PC-3 (cell line): ENCODE measurements at regions of chr9 and their contacts with region 1.

Region 1: GRCh38 chr9:79565245-79565644 is 6.5 kb upstream of the TLE4 start:
- DNase-seq: peak; percentile 65
- ATAC-seq: peak; percentile 67
- H3K4me3 ChIP-seq: no peak overlapping the region
- H3K27ac ChIP-seq: no peak overlapping the region
- H3K4me1 ChIP-seq: peaks cover 18% of the 10 kb centered on the region
- H3K27me3 ChIP-seq: no peaks in the 10 kb centered on the region
- CTCF ChIP-seq: no peak

Region 2: GRCh38 chr9:79360387-79361347 is 204.6 kb before region 1 on chr9:
- CTCF ChIA-PET with region 1: no interaction called
- POLR2A ChIA-PET with region 1: no interaction called
- intact Hi-C with region 1: loop called (anchors 10 kb)
- DNase-seq: peak; percentile 27
- ATAC-seq: no peak
- H3K4me3 ChIP-seq: no peak overlapping the region
- H3K27ac ChIP-seq: no peak overlapping the region
- H3K4me1 ChIP-seq: peaks cover 24% of the 10 kb centered on the region
- H3K27me3 ChIP-seq: no peaks in the 10 kb centered on the region
- CTCF ChIP-seq: no peak

Region 3: DNA sequence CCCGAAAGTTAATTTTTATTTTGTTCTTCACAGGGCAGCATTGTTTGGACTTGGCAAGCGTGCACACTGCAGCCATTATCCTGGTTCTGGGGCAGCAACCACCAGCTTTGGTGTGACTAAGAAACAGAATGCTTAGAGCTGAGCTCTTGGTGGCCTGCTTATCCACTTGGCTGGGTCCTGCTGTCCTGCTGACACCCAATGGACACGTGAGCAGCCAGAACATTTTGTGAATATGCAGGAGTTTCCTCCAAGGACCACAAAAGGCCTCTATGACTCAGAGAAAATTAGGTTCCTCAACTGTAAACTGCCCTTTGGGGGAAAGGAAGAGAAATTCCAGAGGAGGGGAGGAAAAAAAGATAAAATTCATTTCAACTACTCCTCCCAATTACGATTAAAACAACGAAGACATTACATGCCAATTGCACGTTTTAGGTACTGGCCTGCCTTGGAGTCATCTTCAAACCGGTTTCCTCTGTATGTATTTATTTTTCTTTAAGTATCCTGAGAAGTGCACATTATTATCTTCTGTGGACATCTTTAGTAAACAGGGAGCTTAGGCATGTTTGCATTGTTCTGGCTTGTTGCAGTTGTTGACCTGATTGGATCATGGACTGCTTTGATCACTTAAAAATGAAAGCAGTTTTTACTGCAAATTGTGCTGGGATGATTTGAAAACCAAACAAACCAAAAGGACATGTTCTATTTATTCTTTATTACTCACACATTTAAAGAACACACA is 75.8 kb before region 1 on chr9:
- CTCF ChIA-PET with region 1: no interaction called
- POLR2A ChIA-PET with region 1: no interaction called
- intact Hi-C with region 1: loop called (anchors 1 kb)
- DNase-seq: peak; percentile 86
- ATAC-seq: peak; percentile 90
- H3K4me3 ChIP-seq: peak overlapping the region; percentile 50
- H3K27ac ChIP-seq: peak overlapping the region; percentile 92
- H3K4me1 ChIP-seq: peaks cover 35% of the 10 kb centered on the region
- H3K27me3 ChIP-seq: no peaks in the 10 kb centered on the region
- CTCF ChIP-seq: no peak